ENCODE measurements at regions of chr12 and their contacts with region 1.

Region 1: DNA sequence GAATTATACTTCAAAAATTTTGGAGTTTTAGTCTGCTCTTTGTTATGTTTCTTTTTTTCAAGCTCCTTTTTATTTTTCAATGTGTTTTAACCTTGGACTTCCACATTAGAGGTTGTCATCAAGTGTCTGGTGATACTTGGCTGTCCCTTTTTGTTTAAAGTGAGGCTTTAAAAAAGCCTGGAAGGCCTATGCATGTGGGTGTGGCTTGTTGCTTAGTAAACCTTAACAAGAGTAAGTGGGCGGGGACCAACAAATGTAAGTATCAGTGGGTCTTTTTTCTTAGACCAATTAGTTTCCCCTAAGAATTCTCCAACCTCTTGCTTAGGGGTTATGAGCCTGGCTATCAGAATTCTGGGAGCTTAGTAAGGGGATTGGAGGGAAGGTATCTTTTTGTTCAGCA is 26.4 kb downstream of the HCFC2 start:
- DNase-seq: no peak
- H3K4me3 Mint-ChIP-seq: no peak overlapping the region
- H3K27ac Mint-ChIP-seq: no peak overlapping the region
- H3K4me1 Mint-ChIP-seq: peaks cover 8% of the 10 kb centered on the region
- H3K27me3 Mint-ChIP-seq: no peaks in the 10 kb centered on the region

Region 2: DNA sequence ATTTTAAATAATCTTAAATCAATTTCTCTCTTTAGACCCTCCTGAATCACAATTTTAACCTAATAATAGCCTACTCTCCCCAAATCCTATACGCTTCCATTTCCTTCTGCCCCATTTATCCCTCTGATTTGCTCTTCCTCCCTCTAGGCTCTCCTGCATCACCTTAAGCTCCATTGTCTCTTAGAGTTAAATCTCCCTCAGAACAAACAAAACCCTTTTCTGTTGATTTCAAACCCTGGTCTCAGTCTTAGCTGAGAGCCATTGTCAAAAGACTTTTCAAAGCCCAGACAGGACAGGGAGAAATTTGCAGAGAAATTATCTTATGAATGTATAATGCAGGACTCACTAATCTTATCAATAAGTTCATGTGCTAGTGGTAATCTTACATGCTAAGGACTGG is 1345.9 kb after region 1 on chr12:
- CTCF ChIA-PET with region 1: no interaction called
- intact Hi-C with region 1: loop called (anchors 5 kb)
- DNase-seq: no peak
- H3K4me3 Mint-ChIP-seq: no peak overlapping the region
- H3K27ac Mint-ChIP-seq: no peak overlapping the region
- H3K4me1 Mint-ChIP-seq: no peaks in the 10 kb centered on the region
- H3K27me3 Mint-ChIP-seq: peaks cover 24% of the 10 kb centered on the region